HAP-1 (cell line): ENCODE measurements at regions of chr15 and their contacts with region 1.

Region 1: GRCh38 chr15:51634591-51635198 is 12.1 kb upstream of the DMXL2 start:
- DNase-seq: no peak
- H3K4me3 ChIP-seq: no peak overlapping the region
- H3K4me1 ChIP-seq: no peaks in the 10 kb centered on the region
- H3K27me3 ChIP-seq: no peaks in the 10 kb centered on the region; the same call in 1 of the 2 replicates

Region 2: GRCh38 chr15:51697163-51697562 is 62.5 kb after region 1 on chr15:
- in situ Hi-C with region 1: no loop called
- DNase-seq: no peak
- H3K4me3 ChIP-seq: no peak overlapping the region
- H3K4me1 ChIP-seq: no peaks in the 10 kb centered on the region
- H3K27me3 ChIP-seq: peaks cover 26% of the 10 kb centered on the region

Region 3: GRCh38 chr15:51776952-51777574 is 142.4 kb after region 1 on chr15:
- in situ Hi-C with region 1: loop called (anchors 5 kb)
- DNase-seq: peak; percentile 67 to 79
- H3K4me3 ChIP-seq: no peak overlapping the region
- H3K4me1 ChIP-seq: peaks cover 11% of the 10 kb centered on the region
- H3K27me3 ChIP-seq: no peaks in the 10 kb centered on the region